Activated T-helper 1 cell treated with anti-CD3 and anti-CD28 coated beads, Interleukin-12 subunit alpha, Interleukin-12 subunit beta, Interleukin-2, Interleukin-4 antibody, amounts not matched to agents 30 ng/mL and 10 ng/mL and 1 ng/mL, durations not matched to agents 14 hours and 24 hours and 36 hours (primary cell): ENCODE measurements at regions of chr5 and their contacts with region 1.

Region 1: DNA sequence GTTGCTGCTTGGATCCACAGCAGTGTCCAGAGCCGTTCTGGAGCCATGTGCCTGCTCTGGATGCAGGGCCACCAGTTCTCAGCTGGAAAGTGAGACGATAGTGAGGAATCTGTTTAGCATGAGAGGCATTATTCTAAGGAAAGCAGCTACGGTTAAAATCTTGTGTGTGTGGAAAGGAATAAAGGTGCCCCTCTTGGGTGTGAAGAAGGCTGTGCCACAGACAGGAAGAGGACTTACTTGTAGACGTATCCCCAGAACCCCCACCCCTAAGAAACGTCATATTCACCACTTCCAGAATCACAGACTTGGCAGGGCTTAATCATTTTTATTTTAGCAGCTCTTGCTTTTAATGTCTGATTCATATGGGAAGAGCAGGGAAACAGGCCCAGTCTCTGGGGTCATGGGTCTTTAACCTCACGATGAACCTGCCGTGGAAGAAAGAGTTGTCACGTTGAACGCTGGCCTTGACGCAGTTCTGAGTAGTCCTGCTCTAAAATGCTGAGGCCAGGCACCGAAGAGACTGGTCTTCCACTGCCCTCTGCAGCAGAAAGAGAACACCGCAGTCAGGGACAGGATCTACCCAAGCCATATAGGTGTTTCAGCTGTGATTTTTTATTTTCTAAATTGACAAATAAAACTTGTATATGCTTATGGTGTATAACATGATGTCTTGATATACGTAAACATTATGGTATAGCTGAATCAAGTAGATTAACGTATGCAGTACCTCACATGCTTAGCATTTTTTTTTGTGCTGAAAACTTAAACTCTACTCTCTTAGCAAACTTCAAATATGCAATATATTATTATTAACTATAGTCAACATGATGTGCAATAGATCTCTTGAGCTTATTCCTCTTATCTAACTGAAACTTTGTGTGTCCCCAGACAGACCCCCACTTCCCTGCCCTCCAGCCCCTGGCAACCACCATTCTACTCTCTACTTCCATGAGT is 38.8 kb downstream of the CARTPT start:
- DNase-seq: peak; percentile 17
- H3K4me3 Mint-ChIP-seq: no peak overlapping the region
- H3K27ac Mint-ChIP-seq: no peak overlapping the region
- H3K4me1 Mint-ChIP-seq: peaks cover 6% of the 10 kb centered on the region
- H3K27me3 Mint-ChIP-seq: peaks cover 4% of the 10 kb centered on the region

Region 2: DNA sequence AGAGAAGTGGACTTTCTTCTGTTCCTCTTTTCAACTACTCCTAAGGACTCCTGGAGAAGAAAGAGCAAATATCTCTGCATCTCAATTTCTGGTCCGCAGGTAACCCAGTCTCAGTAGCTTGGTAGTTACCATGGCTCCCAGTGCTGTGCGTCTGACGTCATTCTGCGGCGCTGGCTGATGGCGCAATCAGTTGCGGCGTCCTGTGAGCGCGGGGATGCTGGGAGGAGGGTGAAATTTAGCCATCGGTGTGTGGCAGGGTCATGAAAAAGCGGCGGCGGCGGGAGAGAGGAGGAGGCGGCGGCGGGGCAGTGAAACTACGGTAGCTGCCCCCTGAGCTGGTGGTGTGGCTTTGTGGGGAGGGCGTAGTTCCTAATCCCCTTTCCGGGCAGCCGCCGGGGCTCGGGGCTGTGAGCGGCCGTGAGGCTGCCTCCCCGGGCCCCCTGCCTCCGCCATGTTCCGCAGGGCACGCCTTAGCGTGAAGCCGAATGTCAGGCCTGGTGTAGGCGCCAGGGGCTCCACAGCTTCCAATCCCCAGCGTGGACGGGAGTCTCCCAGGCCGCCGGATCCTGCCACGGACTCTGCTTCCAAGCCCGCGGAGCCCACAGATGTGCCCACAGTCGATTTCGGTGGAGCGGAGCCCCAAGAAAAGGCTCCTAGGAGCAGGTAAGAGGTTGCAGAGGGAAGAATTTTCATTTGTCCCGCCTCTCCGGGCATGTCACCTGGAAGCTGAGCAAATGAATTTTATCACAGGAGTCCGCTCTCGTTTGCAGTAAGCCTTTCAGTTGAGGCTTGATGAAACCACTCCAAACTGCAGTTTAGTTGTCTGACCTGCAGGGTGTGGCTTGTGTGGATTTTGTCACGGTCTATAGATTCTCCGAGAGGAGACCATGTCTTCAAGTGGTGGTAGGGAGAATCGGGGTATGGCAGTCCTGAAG is 302.2 kb before region 1 on chr5 and contains the start of gene BDP1:
- intact Hi-C with region 1: loop called (anchors 5 kb)
- DNase-seq: peak; percentile 94
- H3K4me3 Mint-ChIP-seq: peak within 1 kb of the TSS; percentile 98
- H3K27ac Mint-ChIP-seq: peak within 1 kb of the TSS; percentile 100
- H3K4me1 Mint-ChIP-seq: peaks cover 30% of the 10 kb centered on the region
- H3K27me3 Mint-ChIP-seq: peaks cover under 1% of the 10 kb centered on the region
- total RNA-seq, gene BDP1: 41.2 and 41.5 TPM in 2 replicates

Region 3: DNA sequence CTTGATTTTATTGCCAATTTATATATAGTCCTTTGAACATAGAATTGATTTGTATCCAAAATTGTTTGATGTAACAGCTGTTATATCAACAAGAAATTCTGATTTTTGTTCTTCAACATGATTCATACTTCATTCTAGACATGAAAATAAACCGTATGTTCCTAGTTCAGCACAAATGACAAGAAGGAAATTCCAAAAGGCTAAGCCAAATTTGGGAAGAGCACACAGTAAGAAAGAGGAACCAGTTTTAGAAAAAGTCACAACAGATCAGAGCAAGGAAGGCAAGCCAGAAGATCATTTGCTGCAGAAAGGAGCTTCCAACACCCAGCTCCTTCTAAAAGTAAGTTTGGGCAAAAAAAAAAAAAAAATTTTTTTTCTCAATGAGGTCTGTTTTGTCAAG is 235.7 kb before region 1 on chr5:
- intact Hi-C with region 1: loop called (anchors 10 kb)
- DNase-seq: no peak
- H3K4me3 Mint-ChIP-seq: no peak overlapping the region
- H3K27ac Mint-ChIP-seq: no peak overlapping the region
- H3K4me1 Mint-ChIP-seq: no peaks in the 10 kb centered on the region
- H3K27me3 Mint-ChIP-seq: no peaks in the 10 kb centered on the region

Region 4: DNA sequence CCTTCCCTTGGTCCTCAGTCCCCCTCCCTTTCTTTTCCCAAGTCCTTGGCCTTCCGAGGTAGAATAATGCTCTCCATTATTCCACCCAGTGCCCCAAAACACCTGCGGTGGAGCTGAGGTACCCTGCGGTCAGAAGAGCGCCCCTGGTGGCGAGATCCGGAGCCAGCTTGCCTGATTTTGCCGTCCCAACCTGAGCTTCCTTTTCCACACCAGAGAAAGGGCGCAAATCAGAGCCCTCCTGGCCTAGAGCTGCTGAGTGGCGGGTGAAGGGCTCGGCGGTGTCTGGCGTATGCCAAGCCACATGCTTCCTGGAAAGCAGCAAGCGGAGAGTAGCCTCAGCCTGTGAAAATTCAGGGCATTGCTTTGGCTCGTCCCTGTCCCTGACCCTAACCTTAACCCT is 59.9 kb before region 1 on chr5:
- intact Hi-C with region 1: no loop called
- DNase-seq: no peak
- H3K4me3 Mint-ChIP-seq: no peak overlapping the region
- H3K27ac Mint-ChIP-seq: no peak overlapping the region
- H3K4me1 Mint-ChIP-seq: no peaks in the 10 kb centered on the region
- H3K27me3 Mint-ChIP-seq: peaks cover 24% of the 10 kb centered on the region

Region 5: GRCh38 chr5:71887680-71888079 is 129.8 kb after region 1 on chr5:
- intact Hi-C with region 1: no loop called
- DNase-seq: no peak
- H3K4me3 Mint-ChIP-seq: no peak overlapping the region
- H3K27ac Mint-ChIP-seq: no peak overlapping the region
- H3K4me1 Mint-ChIP-seq: no peaks in the 10 kb centered on the region
- H3K27me3 Mint-ChIP-seq: peaks cover 2% of the 10 kb centered on the region